Prostate gland (tissue), 2 donors: ENCODE measurements at regions of chr1 and their contacts with region 1.

Region 1: GRCh38 chr1:241582921-241583331 is 50.7 kb downstream of the KMO start:
- DNase-seq: no peak
- H3K4me3 ChIP-seq: no peak overlapping the region
- H3K27ac ChIP-seq: no peak overlapping the region
- H3K4me1 ChIP-seq: no peaks in the 10 kb centered on the region
- H3K27me3 ChIP-seq: no peaks in the 10 kb centered on the region
- CTCF ChIP-seq: no peak
- POLR2A ChIP-seq: no peak

Region 2: GRCh38 chr1:241688940-241689368 is 106.0 kb after region 1 on chr1:
- intact Hi-C with region 1: loop called (anchors 10 kb)
- DNase-seq: no peak
- H3K4me3 ChIP-seq: no peak overlapping the region
- H3K27ac ChIP-seq: no peak overlapping the region
- H3K4me1 ChIP-seq: no peaks in the 10 kb centered on the region
- H3K27me3 ChIP-seq: no peaks in the 10 kb centered on the region
- CTCF ChIP-seq: no peak
- POLR2A ChIP-seq: no peak